IMR-90 (cell line): ENCODE measurements at regions of chr22 and their contacts with region 1.

Region 1: DNA sequence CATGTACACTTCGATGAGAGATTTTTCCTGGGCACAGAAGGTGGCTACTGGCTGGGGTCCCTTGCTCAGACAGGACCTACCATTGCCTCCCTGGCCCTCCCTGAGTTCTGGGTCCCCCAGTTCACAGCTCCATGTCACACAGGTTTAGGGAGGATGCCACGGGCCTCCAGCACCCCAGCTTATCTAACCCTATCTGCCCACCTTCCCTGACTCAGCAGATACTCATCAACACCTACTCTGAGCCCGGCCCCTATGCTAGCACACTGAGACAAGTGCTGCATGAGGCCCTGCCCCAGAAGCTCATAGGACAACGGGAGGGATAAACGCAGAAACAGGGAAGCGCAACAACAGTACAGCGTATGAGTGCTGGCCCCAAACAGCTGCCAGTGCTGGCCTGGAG is 9.6 kb downstream of the NAGA start:
- DNase-seq: no peak
- ATAC-seq: no peak
- H3K4me3 ChIP-seq: no peak overlapping the region
- H3K27ac ChIP-seq: no peak overlapping the region
- H3K4me1 ChIP-seq: no peaks in the 10 kb centered on the region
- H3K27me3 ChIP-seq: no peaks in the 10 kb centered on the region
- CTCF ChIP-seq: no peak
- POLR2A ChIP-seq: no peak
- RAD21 ChIP-seq: no peak

Region 2: GRCh38 chr22:41697126-41697775 is 363.8 kb before region 1 on chr22:
- CTCF ChIA-PET with region 1: no interaction called
- POLR2A ChIA-PET with region 1: interaction called, 14 read pairs
- dilution Hi-C with region 1: no loop called
- in situ Hi-C with region 1: no loop called
- intact Hi-C with region 1: no loop called
- DNase-seq: peak; percentile 80
- ATAC-seq: peak; percentile 92
- H3K4me3 ChIP-seq: no peak overlapping the region
- H3K27ac ChIP-seq: peak overlapping the region; percentile 37
- H3K4me1 ChIP-seq: peaks cover 6% of the 10 kb centered on the region
- H3K27me3 ChIP-seq: no peaks in the 10 kb centered on the region; the same call in 1 of the 2 replicates
- CTCF ChIP-seq: peak; percentile 88
- POLR2A ChIP-seq: no peak
- RAD21 ChIP-seq: peak; percentile 84

Region 3: GRCh38 chr22:42160830-42161696 is 100.0 kb after region 1 on chr22:
- CTCF ChIA-PET with region 1: no interaction called
- POLR2A ChIA-PET with region 1: no interaction called
- dilution Hi-C with region 1: no loop called
- in situ Hi-C with region 1: no loop called
- intact Hi-C with region 1: no loop called
- DNase-seq: no peak
- ATAC-seq: no peak
- H3K4me3 ChIP-seq: no peak overlapping the region
- H3K27ac ChIP-seq: no peak overlapping the region
- H3K4me1 ChIP-seq: no peaks in the 10 kb centered on the region
- H3K27me3 ChIP-seq: no peaks in the 10 kb centered on the region
- CTCF ChIP-seq: no peak
- POLR2A ChIP-seq: no peak
- RAD21 ChIP-seq: no peak